B cell (primary cell): ENCODE measurements at regions of chr1 and their contacts with region 1.

Region 1: DNA sequence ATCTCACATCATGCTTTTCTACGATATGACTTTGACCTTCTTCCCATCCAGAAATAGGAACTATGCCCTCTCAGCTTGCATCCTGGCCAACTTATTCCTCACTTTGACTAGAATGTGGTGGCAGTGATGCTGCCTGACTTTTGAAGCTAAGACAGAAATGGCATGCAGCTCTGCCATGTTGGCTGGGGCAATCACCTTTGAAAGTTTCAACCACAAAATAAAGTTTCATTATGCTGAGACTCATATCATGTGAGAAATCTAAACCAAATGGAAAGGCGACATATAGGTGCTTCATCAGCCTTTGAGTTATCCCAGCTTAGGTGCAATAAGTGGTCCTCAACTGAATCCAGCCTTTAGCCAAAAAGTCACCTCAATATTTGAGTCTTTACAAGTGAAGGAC is 370.0 kb upstream of the CHRM3 start:
- DNase-seq: no peak
- ATAC-seq: no peak
- H3K4me3 ChIP-seq: no peak overlapping the region
- H3K4me3 Mint-ChIP-seq: no peak overlapping the region
- H3K27ac ChIP-seq: no peak overlapping the region
- H3K27ac Mint-ChIP-seq: no peak overlapping the region
- H3K4me1 ChIP-seq: no peaks in the 10 kb centered on the region
- H3K4me1 Mint-ChIP-seq: no peaks in the 10 kb centered on the region
- H3K27me3 ChIP-seq: no peaks in the 10 kb centered on the region
- H3K27me3 Mint-ChIP-seq: no peaks in the 10 kb centered on the region
- CTCF ChIP-seq: no peak

Region 2: GRCh38 chr1:239056940-239057339 is 40.6 kb after region 1 on chr1:
- CTCF ChIA-PET with region 1: no interaction called
- POLR2A ChIA-PET with region 1: no interaction called
- intact Hi-C with region 1: loop called (anchors 1 kb)
- DNase-seq: no peak
- ATAC-seq: no peak
- H3K4me3 ChIP-seq: no peak overlapping the region
- H3K4me3 Mint-ChIP-seq: no peak overlapping the region
- H3K27ac ChIP-seq: no peak overlapping the region
- H3K27ac Mint-ChIP-seq: no peak overlapping the region
- H3K4me1 ChIP-seq: no peaks in the 10 kb centered on the region
- H3K4me1 Mint-ChIP-seq: no peaks in the 10 kb centered on the region
- H3K27me3 ChIP-seq: no peaks in the 10 kb centered on the region
- H3K27me3 Mint-ChIP-seq: no peaks in the 10 kb centered on the region
- CTCF ChIP-seq: no peak